A673 (cell line): ENCODE measurements at regions of chr19 and their contacts with region 1.

Region 1: DNA sequence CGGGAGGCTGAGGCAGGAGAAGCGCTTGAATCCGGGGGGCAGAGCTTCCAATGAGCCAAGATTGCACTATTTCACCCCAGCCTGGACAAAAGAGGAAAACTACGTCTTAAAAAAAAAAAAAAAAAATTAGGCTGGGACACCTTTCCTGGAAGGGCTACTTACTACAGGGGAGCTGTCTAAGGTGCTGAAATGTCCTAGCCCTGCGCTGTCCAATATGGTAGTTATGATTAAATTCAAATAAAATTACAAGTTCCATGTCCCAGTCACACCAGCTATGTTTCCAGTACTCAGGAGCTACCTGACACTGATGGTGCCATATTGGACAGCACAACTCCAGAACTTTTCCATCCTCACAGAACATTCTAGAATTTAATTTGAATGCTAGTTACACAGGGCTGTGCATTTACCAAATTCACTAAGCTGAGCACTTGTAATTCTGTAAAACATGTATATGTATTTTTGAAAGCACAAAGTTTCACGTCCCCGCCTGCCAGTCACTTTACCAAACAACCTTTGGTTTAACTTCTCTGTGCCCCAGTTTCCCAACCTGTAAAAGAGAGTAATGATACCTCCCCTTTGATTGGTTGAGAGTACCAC is 9.2 kb upstream of the ZSCAN22 start:
- DNase-seq: peak; percentile 33
- H3K4me3 ChIP-seq: no peak overlapping the region
- H3K27ac ChIP-seq: no peak overlapping the region
- H3K4me1 ChIP-seq: no peaks in the 10 kb centered on the region
- H3K27me3 ChIP-seq: no peaks in the 10 kb centered on the region
- CTCF ChIP-seq: no peak

Region 2: GRCh38 chr19:58278157-58279041 is 39.2 kb before region 1 on chr19 and contains the start of gene ZNF8:
- CTCF ChIA-PET with region 1: no interaction called
- POLR2A ChIA-PET with region 1: no interaction called
- intact Hi-C with region 1: no loop called
- DNase-seq: peak; percentile 99
- H3K4me3 ChIP-seq: peak within 1 kb of the TSS; percentile 87
- H3K27ac ChIP-seq: peak within 1 kb of the TSS; percentile 84
- H3K4me1 ChIP-seq: no peaks in the 10 kb centered on the region
- H3K27me3 ChIP-seq: no peaks in the 10 kb centered on the region
- CTCF ChIP-seq: no peak
- total RNA-seq, gene ZNF8: 11.9 and 12.5 TPM in 2 replicates

Region 3: DNA sequence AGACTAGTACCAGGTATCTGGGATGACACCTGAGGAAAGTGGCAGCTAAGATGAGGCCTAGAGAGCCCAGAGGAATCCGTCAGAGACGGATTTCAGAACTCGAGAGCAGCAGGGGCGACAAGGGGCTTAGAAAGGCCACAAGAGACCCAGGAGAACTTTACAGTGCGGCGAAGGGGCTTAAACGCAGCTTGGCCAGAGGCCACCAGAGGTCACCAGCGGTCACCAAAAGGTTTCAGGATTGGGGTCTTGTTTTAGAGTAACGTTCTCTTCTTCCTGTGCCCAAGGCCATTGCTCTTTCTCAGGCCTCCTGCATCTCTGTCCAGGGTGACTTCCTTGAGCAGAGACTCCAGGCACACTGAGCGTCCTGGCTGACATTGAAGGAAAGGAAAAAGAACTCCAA is 11.4 kb after region 1 on chr19:
- CTCF ChIA-PET with region 1: no interaction called
- POLR2A ChIA-PET with region 1: interaction called, 11 read pairs
- intact Hi-C with region 1: no loop called
- DNase-seq: peak; percentile 17
- H3K4me3 ChIP-seq: no peak overlapping the region
- H3K27ac ChIP-seq: no peak overlapping the region
- H3K4me1 ChIP-seq: no peaks in the 10 kb centered on the region
- H3K27me3 ChIP-seq: no peaks in the 10 kb centered on the region
- CTCF ChIP-seq: peak; percentile 33; the same call in 1 of the 2 replicates

Region 4: GRCh38 chr19:58476498-58477015 is 159.0 kb after region 1 on chr19:
- CTCF ChIA-PET with region 1: no interaction called
- POLR2A ChIA-PET with region 1: no interaction called
- intact Hi-C with region 1: no loop called
- DNase-seq: peak; percentile 22
- H3K4me3 ChIP-seq: peak overlapping the region; percentile 61
- H3K27ac ChIP-seq: peak overlapping the region; percentile 84
- H3K4me1 ChIP-seq: peaks cover 6% of the 10 kb centered on the region
- H3K27me3 ChIP-seq: no peaks in the 10 kb centered on the region
- CTCF ChIP-seq: no peak